ENCODE measurements at regions of chr7 and their contacts with region 1.

Region 1: GRCh38 chr7:7114706-7115295 is 67.5 kb upstream of the C1GALT1 start:
- DNase-seq: no peak

Region 2: DNA sequence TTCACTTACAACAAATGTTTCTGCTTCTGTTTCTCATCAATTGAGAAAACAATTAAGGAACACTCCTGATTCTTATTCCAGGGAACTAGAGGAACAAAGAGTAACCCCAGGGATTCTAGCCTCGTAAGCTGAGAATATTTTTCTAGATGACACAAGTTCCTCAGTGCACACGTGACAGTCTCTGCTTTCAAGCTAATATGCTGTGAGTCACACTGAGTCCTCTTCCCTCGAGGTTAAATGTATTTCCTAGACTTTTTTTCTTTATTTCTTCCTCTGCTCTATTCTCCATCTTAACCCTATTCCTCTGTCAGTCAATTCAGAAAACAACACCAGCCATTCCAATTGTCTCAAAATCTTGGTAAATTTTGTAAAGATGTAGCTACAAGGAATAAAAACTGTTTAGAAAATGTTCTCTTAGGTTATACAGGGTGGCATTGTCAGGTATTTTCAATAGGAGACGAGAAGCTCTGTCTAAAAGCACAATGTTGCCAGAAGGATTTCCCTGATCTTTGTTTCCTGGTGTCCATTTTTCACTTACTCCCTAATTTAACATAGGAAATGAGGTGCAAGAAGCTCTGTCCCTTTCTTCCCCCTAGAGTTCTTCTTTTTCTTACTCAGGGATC is 61.7 kb after region 1 on chr7:
- intact Hi-C with region 1: no loop called
- DNase-seq: no peak

Region 3: DNA sequence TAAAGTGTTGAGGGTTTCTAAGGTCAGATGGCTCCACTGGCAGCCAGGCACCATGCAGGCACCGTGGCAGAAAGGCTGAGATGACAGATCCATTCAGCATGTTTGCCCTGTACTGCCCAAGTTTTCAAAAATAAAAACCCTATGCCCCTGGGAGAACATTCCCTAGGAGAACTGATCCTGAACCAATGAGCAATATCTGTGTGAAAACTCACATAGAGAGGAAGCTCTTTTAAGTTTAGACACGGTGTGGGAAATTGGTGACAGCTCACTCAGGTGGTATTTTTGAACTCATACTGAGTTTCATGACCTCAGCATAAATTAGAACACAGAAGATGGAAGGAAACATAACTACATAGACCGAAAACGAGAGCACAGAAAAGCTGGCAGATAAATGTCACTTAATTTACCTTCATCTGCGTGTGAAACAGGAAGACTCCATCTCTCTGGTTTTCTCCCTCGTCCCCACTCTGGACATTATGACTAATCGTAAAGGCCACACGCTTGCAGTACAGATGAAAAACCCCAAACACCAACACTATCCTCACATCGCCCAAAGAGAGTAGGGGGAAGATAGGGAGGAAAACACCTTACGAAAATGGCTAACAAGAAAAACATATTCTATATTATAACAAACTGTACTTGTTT is 1019.4 kb after region 1 on chr7:
- intact Hi-C with region 1: loop called in 1 of 2 experiments (anchors 10 kb)
- DNase-seq: no peak

Measured in posterior vena cava (tissue), 2 donors.